Natural killer cell (primary cell): ENCODE measurements at regions of chr1 and their contacts with region 1.

Region 1: GRCh38 chr1:160877221-160877620 is 7.8 kb downstream of the ITLN1 start:
- DNase-seq: peak in 1 of 2 donors; percentile 75
- ATAC-seq: peak; percentile 82 to 97 (median 91)
- H3K4me3 ChIP-seq: no peak overlapping the region
- H3K4me3 Mint-ChIP-seq: no peak overlapping the region
- H3K27ac ChIP-seq: no peak overlapping the region
- H3K27ac Mint-ChIP-seq: peak overlapping the region in 1 of 2 donors; percentile 14
- H3K4me1 ChIP-seq: peaks cover 16% of the 10 kb centered on the region
- H3K4me1 Mint-ChIP-seq: peaks cover 16 to 17% of the 10 kb centered on the region in 2 donors
- H3K27me3 ChIP-seq: no peaks in the 10 kb centered on the region
- H3K27me3 Mint-ChIP-seq: no peaks in the 10 kb centered on the region
- CTCF ChIP-seq: peak; percentile 73

Region 2: GRCh38 chr1:160777486-160778089 is 99.6 kb before region 1 on chr1:
- intact Hi-C with region 1: loop called (anchors 5 kb)
- DNase-seq: peak in 1 of 2 donors; percentile 81
- ATAC-seq: peak; percentile 57 to 80 (median 68)
- H3K4me3 ChIP-seq: no peak overlapping the region
- H3K4me3 Mint-ChIP-seq: no peak overlapping the region
- H3K27ac ChIP-seq: no peak overlapping the region
- H3K27ac Mint-ChIP-seq: no peak overlapping the region
- H3K4me1 ChIP-seq: peaks cover 14% of the 10 kb centered on the region
- H3K4me1 Mint-ChIP-seq: peaks cover 0 to 12% of the 10 kb centered on the region in 2 donors
- H3K27me3 ChIP-seq: no peaks in the 10 kb centered on the region
- H3K27me3 Mint-ChIP-seq: no peaks in the 10 kb centered on the region
- CTCF ChIP-seq: peak; percentile 53

Region 3: DNA sequence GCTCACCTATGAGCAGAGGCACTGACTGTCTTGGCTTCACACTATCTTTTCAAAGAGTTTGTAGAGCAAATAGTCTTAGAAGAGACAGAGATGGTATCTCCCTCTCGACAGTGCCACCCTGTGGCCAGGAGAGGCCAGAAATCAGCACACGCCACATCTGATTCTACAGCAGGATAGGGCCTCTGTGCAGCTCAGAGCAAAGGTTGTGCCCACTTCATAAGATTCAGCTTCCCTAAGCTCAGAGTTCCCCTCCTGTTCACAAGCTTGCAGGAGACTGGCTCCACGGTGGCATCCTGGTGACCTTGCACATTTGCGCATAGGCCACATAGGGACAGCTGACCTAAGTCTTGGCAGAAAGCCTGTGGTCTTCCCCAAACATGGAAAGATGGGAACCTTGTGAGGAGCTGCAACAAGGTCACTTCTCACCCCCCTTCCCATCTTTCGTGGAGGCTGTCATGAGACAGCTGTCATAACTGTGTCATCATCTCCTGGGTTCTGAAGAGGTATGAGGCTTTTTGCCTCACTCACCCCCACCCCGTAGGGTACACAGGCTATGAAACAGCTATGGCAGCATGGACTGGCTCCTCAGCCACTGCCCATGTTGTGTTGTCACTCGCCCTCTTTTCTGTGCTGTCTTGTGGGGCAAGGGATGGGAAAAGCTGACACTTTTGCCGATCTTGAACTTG is 74.4 kb after region 1 on chr1:
- intact Hi-C with region 1: loop called (anchors 5 kb)
- DNase-seq: peak; percentile 58 to 85
- ATAC-seq: peak; percentile 83 to 84 (median 84)
- H3K4me3 ChIP-seq: no peak overlapping the region
- H3K4me3 Mint-ChIP-seq: no peak overlapping the region
- H3K27ac ChIP-seq: no peak overlapping the region
- H3K27ac Mint-ChIP-seq: no peak overlapping the region
- H3K4me1 ChIP-seq: peaks cover 15% of the 10 kb centered on the region
- H3K4me1 Mint-ChIP-seq: peaks cover 27 to 30% of the 10 kb centered on the region in 2 donors
- H3K27me3 ChIP-seq: no peaks in the 10 kb centered on the region
- H3K27me3 Mint-ChIP-seq: peaks cover 2 to 15% of the 10 kb centered on the region in 2 donors
- CTCF ChIP-seq: peak; percentile 68